ENCODE measurements at regions of chr19 and their contacts with region 1.

Region 1: DNA sequence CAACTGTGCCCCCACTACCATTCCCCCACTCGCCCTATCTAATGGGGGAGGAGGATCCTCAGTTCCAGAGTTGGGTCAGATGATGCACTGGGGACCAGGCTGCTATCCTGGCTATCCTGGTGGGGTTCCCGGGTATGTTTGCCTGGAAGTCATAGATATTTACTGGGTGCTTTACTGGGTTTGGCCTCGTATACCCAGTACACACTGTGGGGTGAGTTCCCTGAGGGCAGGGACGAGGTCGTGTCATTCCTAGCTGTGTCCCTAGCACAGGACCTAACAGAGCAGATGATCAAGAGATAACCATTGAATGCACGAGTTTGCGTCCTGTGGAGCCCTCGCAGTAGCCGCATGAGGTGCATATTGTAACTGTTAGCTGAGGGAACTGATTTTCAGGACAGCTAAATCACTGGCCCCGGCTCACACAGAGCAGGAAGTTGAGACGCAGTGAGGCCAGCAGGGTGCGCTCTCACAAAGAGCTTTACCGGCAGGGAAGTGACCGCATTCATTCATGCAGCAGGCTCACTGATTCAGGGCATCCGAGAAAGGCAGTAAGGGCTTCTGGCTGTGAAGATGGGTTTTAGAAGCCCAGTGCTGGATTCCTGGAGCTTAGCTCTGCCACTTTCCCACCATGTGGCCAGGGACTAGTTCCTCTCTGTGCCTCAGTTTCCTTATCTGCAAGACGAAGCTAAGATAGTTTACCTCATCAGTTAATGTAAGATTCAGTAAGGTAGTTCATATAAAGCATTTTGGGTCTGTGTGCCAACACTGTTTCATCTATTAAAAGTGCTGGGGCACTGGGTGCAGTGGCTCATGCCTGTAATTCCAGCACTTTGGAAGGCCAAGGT is 6.0 kb downstream of the RUVBL2 start:
- DNase-seq: peak; percentile 68
- ATAC-seq: peak; percentile 75
- H3K4me3 ChIP-seq: no peak overlapping the region
- H3K4me3 Mint-ChIP-seq: no peak overlapping the region
- H3K27ac ChIP-seq: no peak overlapping the region
- H3K27ac Mint-ChIP-seq: no peak overlapping the region
- H3K4me1 ChIP-seq: peaks cover 0 to 11% of the 10 kb centered on the region in 2 donors
- H3K4me1 Mint-ChIP-seq: peaks cover 11% of the 10 kb centered on the region
- H3K27me3 ChIP-seq: no peaks in the 10 kb centered on the region
- H3K27me3 Mint-ChIP-seq: no peaks in the 10 kb centered on the region
- CTCF ChIP-seq: peak; percentile 75

Region 2: GRCh38 chr19:49009828-49010227 is 10.1 kb after region 1 on chr19:
- CTCF ChIA-PET with region 1: interaction called, 10 read pairs
- POLR2A ChIA-PET with region 1: no interaction called
- intact Hi-C with region 1: no loop called
- DNase-seq: no peak
- ATAC-seq: no peak
- H3K4me3 ChIP-seq: no peak overlapping the region
- H3K4me3 Mint-ChIP-seq: no peak overlapping the region
- H3K27ac ChIP-seq: no peak overlapping the region
- H3K27ac Mint-ChIP-seq: no peak overlapping the region
- H3K4me1 ChIP-seq: no peaks in the 10 kb centered on the region
- H3K4me1 Mint-ChIP-seq: no peaks in the 10 kb centered on the region
- H3K27me3 ChIP-seq: no peaks in the 10 kb centered on the region
- H3K27me3 Mint-ChIP-seq: no peaks in the 10 kb centered on the region
- CTCF ChIP-seq: no peak

Region 3: DNA sequence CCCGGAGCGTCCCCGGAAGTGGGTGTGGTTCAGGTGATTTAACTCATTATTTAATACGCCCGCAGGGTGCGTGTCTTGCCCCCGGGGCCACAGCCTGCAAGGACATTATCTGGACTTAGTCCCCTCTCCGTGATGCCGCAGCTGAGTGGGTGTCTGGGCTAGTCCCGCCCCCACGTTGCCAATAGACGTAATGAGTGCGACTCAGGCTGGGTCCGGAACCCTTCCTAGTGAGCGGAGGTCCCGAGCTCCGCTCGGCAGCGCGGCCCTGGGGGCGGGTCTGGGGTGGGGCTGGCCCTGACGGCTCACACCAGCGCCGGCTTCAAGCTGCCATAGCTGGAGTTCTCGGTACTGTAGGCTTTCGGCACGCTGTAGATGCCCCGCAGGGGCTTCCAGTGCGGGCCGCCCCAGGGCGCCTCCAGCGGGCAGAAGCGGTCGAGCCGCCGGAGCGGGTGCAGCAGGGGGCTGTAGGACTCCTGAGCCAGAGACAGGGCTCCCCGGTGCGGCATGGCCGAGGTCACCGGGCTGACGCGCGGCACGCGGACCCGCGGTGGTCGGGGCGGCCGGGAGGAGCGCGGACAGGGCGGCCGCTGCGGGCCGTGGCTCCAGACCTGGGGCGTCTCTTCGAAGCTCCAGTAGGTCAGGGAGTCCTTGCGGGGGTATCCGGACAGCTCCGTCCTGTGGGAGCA is 18.1 kb after region 1 on chr19:
- CTCF ChIA-PET with region 1: interaction called, 10 read pairs
- POLR2A ChIA-PET with region 1: interaction called, 4 read pairs
- intact Hi-C with region 1: no loop called
- DNase-seq: peak; percentile 82
- ATAC-seq: peak; percentile 80
- H3K4me3 ChIP-seq: peak overlapping the region in 4 of 5 experiments; percentile 52 to 73 (median 60)
- H3K4me3 Mint-ChIP-seq: peak overlapping the region; percentile 89
- H3K27ac ChIP-seq: peak overlapping the region in 1 of 2 donors; percentile 30
- H3K27ac Mint-ChIP-seq: peak overlapping the region; percentile 67
- H3K4me1 ChIP-seq: peaks cover 25 to 40% of the 10 kb centered on the region in 2 donors
- H3K4me1 Mint-ChIP-seq: peaks cover 34% of the 10 kb centered on the region
- H3K27me3 ChIP-seq: peaks cover 0 to 9% (median 2%) of the 10 kb centered on the region in 4 experiments
- H3K27me3 Mint-ChIP-seq: no peaks in the 10 kb centered on the region
- CTCF ChIP-seq: peak; percentile 78

Measured in B cell (primary cell).